BJ (cell line): ENCODE measurements at regions of chr2 and their contacts with region 1.

Region 1: DNA sequence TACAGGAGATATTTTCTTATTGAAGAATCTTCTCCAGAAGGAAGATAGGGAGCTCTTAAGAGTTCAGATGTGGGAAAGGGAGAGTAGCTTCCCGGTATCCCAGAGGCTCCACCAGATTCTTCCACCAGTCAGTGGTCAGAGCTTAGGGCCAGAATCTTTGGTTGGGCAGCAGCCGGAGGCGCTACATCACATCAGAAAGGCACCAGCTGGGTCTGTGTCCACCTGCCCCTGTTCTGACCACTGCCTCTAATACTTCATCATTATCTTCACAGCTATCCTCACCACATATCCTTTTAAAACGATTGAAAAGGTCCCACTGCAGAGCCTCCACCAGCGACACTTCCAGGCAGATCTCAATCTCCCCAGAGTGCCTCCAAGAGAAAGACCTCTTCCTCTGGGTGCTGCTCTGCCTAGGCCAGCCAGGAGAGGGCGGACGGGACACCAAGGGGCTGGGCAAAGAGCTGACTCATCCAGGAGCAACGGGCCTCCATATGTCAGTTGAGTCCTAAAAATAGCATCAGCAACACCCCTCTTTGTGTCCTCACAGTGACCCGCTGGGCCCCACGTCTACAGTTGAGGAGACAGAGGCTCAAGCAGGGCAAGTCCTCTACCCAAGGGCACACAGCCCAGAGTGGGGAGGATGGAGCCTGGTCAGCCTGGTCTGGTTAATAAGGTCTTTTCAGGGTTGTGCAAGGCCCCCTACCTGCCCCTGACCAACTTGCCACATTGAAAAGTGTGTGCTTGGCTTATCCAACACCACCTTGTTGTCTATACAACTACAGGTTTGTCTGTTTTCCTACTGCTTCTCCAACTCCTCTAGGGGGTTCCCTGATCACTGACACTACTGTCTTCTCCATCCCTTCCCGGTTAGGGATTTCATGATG is 81.2 kb downstream of the ADD2 start:
- DNase-seq: no peak
- H3K4me3 ChIP-seq: no peak overlapping the region
- H3K27me3 ChIP-seq: no peaks in the 10 kb centered on the region
- CTCF ChIP-seq: peak; percentile 73

Region 2: GRCh38 chr2:70668432-70668831 is 18.4 kb before region 1 on chr2:
- CTCF ChIA-PET with region 1: interaction called, 11 read pairs
- POLR2A ChIA-PET with region 1: no interaction called
- DNase-seq: no peak
- H3K4me3 ChIP-seq: no peak overlapping the region
- H3K27me3 ChIP-seq: no peaks in the 10 kb centered on the region
- CTCF ChIP-seq: no peak

Region 3: GRCh38 chr2:70698847-70699246 is 12.0 kb after region 1 on chr2:
- CTCF ChIA-PET with region 1: interaction called, 15 read pairs
- POLR2A ChIA-PET with region 1: no interaction called
- DNase-seq: no peak
- H3K4me3 ChIP-seq: no peak overlapping the region
- H3K27me3 ChIP-seq: peaks cover 7% of the 10 kb centered on the region
- CTCF ChIP-seq: no peak

Region 4: DNA sequence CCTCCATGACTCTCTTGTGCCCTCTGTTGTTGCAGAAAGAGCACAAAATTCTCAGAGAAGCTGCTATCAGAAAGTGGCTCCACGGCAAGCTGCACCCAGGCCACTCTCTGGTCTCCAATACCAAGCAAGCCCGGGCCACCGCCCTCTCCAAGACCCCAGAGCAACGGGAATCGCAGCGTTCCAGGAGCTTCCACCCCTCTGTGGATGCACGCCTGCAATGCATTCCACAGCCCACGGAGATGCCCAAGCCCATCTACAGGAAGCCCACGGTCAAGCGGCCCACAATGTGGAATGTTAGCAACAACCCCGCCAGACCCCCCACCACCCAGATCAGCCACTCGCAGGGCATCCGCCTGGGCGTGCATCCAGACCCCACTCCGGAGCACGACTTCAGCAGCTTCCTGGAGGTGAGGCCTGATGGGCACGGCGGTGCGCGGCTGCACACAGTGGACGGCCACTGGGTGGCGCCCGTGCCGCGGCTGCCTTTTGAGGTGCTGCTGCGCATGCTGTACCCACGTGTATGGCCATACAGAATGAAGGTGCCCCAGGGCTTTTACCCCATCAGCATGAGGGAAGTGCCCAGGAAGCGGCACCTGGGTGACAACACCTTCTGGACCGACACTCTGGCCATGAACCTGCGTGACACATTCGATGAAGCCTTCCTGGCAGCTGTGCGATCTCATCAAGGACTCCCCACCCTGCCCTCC is 297.9 kb after region 1 on chr2:
- CTCF ChIA-PET with region 1: no interaction called
- POLR2A ChIA-PET with region 1: no interaction called
- DNase-seq: no peak
- H3K4me3 ChIP-seq: no peak overlapping the region
- H3K27me3 ChIP-seq: no peaks in the 10 kb centered on the region
- CTCF ChIP-seq: peak; percentile 83